CD4-positive, alpha-beta T cell (primary cell): ENCODE measurements at regions of chr4 and their contacts with region 1.

Region 1: DNA sequence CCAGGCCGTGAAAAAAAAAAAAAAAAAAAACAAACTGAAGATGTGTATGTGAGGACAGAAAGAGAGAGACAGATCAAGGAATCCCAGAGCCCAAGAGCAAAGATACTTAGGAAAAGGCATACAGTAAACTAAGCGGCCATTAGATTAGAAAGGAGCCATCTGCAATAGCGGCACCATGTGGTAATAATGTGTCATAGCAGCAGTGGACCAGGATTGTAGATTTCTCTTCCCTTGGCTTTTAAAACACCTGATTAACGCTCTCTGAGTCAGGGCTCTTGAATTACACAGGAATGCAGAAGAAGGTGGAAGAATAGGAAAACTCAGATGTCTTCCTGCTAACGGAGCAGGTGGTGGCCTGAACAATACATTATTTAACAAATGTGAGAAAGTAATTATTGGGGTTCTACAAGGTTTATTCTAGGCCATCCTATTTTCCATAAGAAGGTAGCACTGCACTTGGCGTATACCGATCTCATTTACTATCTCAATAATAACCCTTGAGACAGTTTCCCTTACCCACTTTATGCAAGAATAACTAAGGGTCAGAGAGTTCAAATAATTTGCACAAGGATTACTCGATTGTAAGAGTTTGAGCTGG is 182.7 kb downstream of the KCNIP4 start:
- DNase-seq: peak in 5 of 14 experiments; percentile 5 to 34 (median 12)
- ATAC-seq: peak; percentile 29
- H3K4me3 ChIP-seq: no peak overlapping the region
- H3K4me3 Mint-ChIP-seq: no peak overlapping the region
- H3K27ac ChIP-seq: no peak overlapping the region
- H3K27ac Mint-ChIP-seq: no peak overlapping the region
- H3K4me1 ChIP-seq: no peaks in the 10 kb centered on the region
- H3K4me1 Mint-ChIP-seq: no peaks in the 10 kb centered on the region
- H3K27me3 ChIP-seq: no peaks in the 10 kb centered on the region
- H3K27me3 Mint-ChIP-seq: no peaks in the 10 kb centered on the region
- CTCF ChIP-seq: peak; percentile 62

Region 2: GRCh38 chr4:20422398-20422797 is 1343.5 kb before region 1 on chr4:
- CTCF ChIA-PET with region 1: no interaction called
- POLR2A ChIA-PET with region 1: no interaction called
- intact Hi-C with region 1: loop called (anchors 5 kb)
- DNase-seq: peak in 8 of 14 experiments; percentile 1 to 56 (median 8)
- ATAC-seq: peak; percentile 37
- H3K4me3 ChIP-seq: no peak overlapping the region
- H3K4me3 Mint-ChIP-seq: no peak overlapping the region
- H3K27ac ChIP-seq: no peak overlapping the region
- H3K27ac Mint-ChIP-seq: no peak overlapping the region
- H3K4me1 ChIP-seq: no peaks in the 10 kb centered on the region
- H3K4me1 Mint-ChIP-seq: peaks cover 6% of the 10 kb centered on the region
- H3K27me3 ChIP-seq: no peaks in the 10 kb centered on the region
- H3K27me3 Mint-ChIP-seq: no peaks in the 10 kb centered on the region
- CTCF ChIP-seq: peak; percentile 24

Region 3: DNA sequence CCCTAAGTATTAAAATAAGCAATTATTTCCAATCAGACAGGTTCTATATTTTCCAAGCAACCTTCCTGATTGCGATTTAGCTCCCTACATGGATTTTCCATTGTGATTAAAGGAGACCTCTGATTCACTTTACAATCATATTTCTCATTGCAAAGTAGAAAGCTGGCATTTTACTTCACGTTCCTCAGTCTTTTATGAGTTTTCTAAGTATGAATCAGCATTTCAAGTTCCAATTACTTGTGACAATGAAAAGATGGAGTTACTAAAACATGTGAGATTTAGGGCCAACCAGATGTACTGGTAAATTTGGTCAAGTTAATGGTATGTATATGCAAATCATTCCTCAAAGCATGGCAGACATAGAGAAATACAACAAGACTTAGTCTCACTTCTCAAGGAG is 23.6 kb before region 1 on chr4:
- CTCF ChIA-PET with region 1: no interaction called
- POLR2A ChIA-PET with region 1: no interaction called
- intact Hi-C with region 1: no loop called
- DNase-seq: no peak
- ATAC-seq: no peak
- H3K4me3 ChIP-seq: no peak overlapping the region
- H3K4me3 Mint-ChIP-seq: no peak overlapping the region
- H3K27ac ChIP-seq: no peak overlapping the region
- H3K27ac Mint-ChIP-seq: no peak overlapping the region
- H3K4me1 ChIP-seq: no peaks in the 10 kb centered on the region
- H3K4me1 Mint-ChIP-seq: no peaks in the 10 kb centered on the region
- H3K27me3 ChIP-seq: no peaks in the 10 kb centered on the region
- H3K27me3 Mint-ChIP-seq: no peaks in the 10 kb centered on the region
- CTCF ChIP-seq: no peak

Region 4: DNA sequence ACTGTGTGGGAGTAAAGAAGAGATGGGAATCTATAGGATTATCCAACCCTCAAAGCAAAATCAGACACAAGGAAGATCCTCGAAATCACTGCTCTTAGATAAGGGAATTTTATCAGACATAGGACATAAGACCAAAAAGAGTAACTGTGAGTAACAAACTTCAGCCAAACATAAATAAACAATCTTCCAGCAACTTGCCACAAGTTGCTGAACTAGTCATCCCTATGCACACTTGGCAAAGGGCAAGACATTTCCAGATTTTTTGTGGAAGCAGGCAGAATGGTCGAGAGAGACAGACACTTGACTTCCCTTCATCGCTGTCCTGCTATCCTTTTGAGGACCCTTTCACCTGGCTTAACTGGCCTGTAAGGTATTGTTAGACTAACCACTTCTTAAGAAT is 93.1 kb after region 1 on chr4:
- CTCF ChIA-PET with region 1: no interaction called
- POLR2A ChIA-PET with region 1: no interaction called
- intact Hi-C with region 1: no loop called
- DNase-seq: no peak
- ATAC-seq: no peak
- H3K4me3 ChIP-seq: no peak overlapping the region
- H3K4me3 Mint-ChIP-seq: no peak overlapping the region
- H3K27ac ChIP-seq: no peak overlapping the region
- H3K27ac Mint-ChIP-seq: no peak overlapping the region
- H3K4me1 ChIP-seq: no peaks in the 10 kb centered on the region
- H3K4me1 Mint-ChIP-seq: no peaks in the 10 kb centered on the region
- H3K27me3 ChIP-seq: no peaks in the 10 kb centered on the region
- H3K27me3 Mint-ChIP-seq: peaks cover 5% of the 10 kb centered on the region
- CTCF ChIP-seq: no peak